ENCODE measurements at regions of chr5 and their contacts with region 1.

Region 1: GRCh38 chr5:159456722-159457465 is 126.6 kb upstream of the IL12B start:
- DNase-seq: peak; percentile 84
- H3K4me3 Mint-ChIP-seq: no peak overlapping the region
- H3K27ac Mint-ChIP-seq: no peak overlapping the region
- H3K4me1 Mint-ChIP-seq: peaks cover 43% of the 10 kb centered on the region
- H3K27me3 Mint-ChIP-seq: peaks cover 11% of the 10 kb centered on the region

Region 2: GRCh38 chr5:157858527-157859226 is 1598.2 kb before region 1 on chr5 and contains the start of gene CLINT1:
- CTCF ChIA-PET with region 1: no interaction called
- POLR2A ChIA-PET with region 1: no interaction called
- intact Hi-C with region 1: loop called (anchors 5 kb)
- DNase-seq: peak; percentile 92
- H3K4me3 Mint-ChIP-seq: peak within 1 kb of the TSS; percentile 91
- H3K27ac Mint-ChIP-seq: peak within 1 kb of the TSS; percentile 96
- H3K4me1 Mint-ChIP-seq: peaks cover 73% of the 10 kb centered on the region
- H3K27me3 Mint-ChIP-seq: no peaks in the 10 kb centered on the region
- total RNA-seq, gene CLINT1: 48.7 to 49.4 TPM

Region 3: GRCh38 chr5:159163027-159163700 is 293.7 kb before region 1 on chr5:
- CTCF ChIA-PET with region 1: no interaction called
- POLR2A ChIA-PET with region 1: interaction called, 4 read pairs
- intact Hi-C with region 1: loop called (anchors 1 kb)
- DNase-seq: peak; percentile 24
- H3K4me3 Mint-ChIP-seq: no peak overlapping the region
- H3K27ac Mint-ChIP-seq: peak overlapping the region; percentile 66
- H3K4me1 Mint-ChIP-seq: peaks cover 41% of the 10 kb centered on the region
- H3K27me3 Mint-ChIP-seq: no peaks in the 10 kb centered on the region

Region 4: DNA sequence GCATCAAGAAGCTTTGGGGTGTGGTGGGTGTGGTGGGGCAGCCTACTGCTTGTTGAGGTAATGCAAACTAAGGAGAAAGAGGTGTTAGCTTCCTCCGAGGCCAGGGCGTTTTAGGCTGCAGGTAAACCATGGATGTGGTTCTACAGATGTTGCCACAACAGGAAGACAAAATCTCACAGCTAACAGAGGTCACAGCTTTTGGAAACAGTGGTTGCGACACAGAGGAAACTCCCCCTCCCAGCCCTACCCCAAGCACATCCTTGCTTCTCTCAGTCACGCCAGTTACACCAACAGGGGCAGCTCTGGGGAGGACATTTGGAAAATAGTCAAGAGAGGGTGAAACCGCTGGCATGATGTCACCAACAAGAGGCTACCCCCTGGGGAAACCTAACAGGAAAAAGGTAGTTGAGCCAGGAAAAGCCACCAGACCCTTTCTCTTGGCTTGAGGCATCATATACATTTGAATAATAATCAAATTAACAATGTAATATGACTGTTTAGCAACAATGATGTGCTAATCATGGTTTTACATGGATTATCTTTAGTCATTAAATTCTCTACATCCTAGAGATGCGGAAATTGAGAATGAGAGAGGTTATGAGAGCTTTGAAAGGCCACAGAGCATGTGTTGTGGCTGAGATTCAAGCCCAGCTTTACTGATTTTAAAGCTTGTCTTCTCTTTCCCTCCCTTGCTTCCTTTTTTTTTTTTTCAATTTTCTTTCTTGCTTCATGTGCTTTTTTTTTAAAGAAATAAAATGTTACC is 44.4 kb before region 1 on chr5:
- CTCF ChIA-PET with region 1: interaction called, 16 read pairs
- POLR2A ChIA-PET with region 1: interaction called, 12 read pairs
- intact Hi-C with region 1: loop called (anchors 1 kb)
- DNase-seq: peak; percentile 84
- H3K4me3 Mint-ChIP-seq: no peak overlapping the region
- H3K27ac Mint-ChIP-seq: peak overlapping the region; percentile 30
- H3K4me1 Mint-ChIP-seq: peaks cover 53% of the 10 kb centered on the region
- H3K27me3 Mint-ChIP-seq: peaks cover 8% of the 10 kb centered on the region

Region 5: GRCh38 chr5:159515909-159516415 is 59.1 kb after region 1 on chr5:
- CTCF ChIA-PET with region 1: no interaction called
- POLR2A ChIA-PET with region 1: no interaction called
- intact Hi-C with region 1: loop called (anchors 5 kb)
- DNase-seq: peak; percentile 87
- H3K4me3 Mint-ChIP-seq: no peak overlapping the region
- H3K27ac Mint-ChIP-seq: no peak overlapping the region
- H3K4me1 Mint-ChIP-seq: peaks cover 9% of the 10 kb centered on the region
- H3K27me3 Mint-ChIP-seq: peaks cover 2% of the 10 kb centered on the region

Region 6: GRCh38 chr5:159779481-159779880 is 322.6 kb after region 1 on chr5:
- CTCF ChIA-PET with region 1: no interaction called
- POLR2A ChIA-PET with region 1: no interaction called
- intact Hi-C with region 1: loop called (anchors 2 kb)
- DNase-seq: no peak
- H3K4me3 Mint-ChIP-seq: no peak overlapping the region
- H3K27ac Mint-ChIP-seq: no peak overlapping the region
- H3K4me1 Mint-ChIP-seq: peaks cover 38% of the 10 kb centered on the region
- H3K27me3 Mint-ChIP-seq: peaks cover 41% of the 10 kb centered on the region

Region 7: GRCh38 chr5:159805021-159805420 is 348.1 kb after region 1 on chr5:
- CTCF ChIA-PET with region 1: no interaction called
- POLR2A ChIA-PET with region 1: no interaction called
- intact Hi-C with region 1: no loop called
- DNase-seq: no peak
- H3K4me3 Mint-ChIP-seq: no peak overlapping the region
- H3K27ac Mint-ChIP-seq: no peak overlapping the region
- H3K4me1 Mint-ChIP-seq: no peaks in the 10 kb centered on the region
- H3K27me3 Mint-ChIP-seq: peaks cover 20% of the 10 kb centered on the region

Measured in activated CD4-positive, alpha-beta memory T cell treated with anti-CD3 and anti-CD28 coated beads for 36 hours (primary cell).